BJ (cell line): ENCODE measurements at regions of chrX and their contacts with region 1.

Region 1: DNA sequence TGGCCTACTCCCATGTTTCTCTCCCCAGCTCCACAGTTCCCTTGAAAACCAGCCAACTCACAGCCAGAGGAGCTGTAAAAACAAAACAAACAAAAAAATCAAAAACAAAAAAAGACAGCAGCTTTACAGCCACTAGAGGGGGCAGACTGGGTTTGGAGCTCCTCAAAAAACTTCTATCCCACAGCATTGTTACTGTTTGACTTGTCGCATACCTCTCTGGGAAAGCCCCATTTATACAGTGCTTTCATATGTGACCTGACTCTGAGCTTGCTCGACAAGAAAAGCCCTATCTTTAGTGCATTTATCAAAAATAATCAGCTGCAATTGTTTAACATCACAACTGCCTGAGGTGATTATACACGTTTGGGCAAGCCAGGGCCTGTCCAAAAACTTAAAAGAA is 21.6 kb downstream of the TSPAN6 start:
- DNase-seq: peak; percentile 17
- H3K4me3 ChIP-seq: no peak overlapping the region
- H3K27me3 ChIP-seq: no peaks in the 10 kb centered on the region
- CTCF ChIP-seq: peak; percentile 63

Region 2: GRCh38 chrX:99663136-99663535 is 951.9 kb before region 1 on chrX:
- CTCF ChIA-PET with region 1: no interaction called
- POLR2A ChIA-PET with region 1: no interaction called
- DNase-seq: no peak
- H3K4me3 ChIP-seq: no peak overlapping the region
- H3K27me3 ChIP-seq: no peaks in the 10 kb centered on the region
- CTCF ChIP-seq: no peak

Region 3: DNA sequence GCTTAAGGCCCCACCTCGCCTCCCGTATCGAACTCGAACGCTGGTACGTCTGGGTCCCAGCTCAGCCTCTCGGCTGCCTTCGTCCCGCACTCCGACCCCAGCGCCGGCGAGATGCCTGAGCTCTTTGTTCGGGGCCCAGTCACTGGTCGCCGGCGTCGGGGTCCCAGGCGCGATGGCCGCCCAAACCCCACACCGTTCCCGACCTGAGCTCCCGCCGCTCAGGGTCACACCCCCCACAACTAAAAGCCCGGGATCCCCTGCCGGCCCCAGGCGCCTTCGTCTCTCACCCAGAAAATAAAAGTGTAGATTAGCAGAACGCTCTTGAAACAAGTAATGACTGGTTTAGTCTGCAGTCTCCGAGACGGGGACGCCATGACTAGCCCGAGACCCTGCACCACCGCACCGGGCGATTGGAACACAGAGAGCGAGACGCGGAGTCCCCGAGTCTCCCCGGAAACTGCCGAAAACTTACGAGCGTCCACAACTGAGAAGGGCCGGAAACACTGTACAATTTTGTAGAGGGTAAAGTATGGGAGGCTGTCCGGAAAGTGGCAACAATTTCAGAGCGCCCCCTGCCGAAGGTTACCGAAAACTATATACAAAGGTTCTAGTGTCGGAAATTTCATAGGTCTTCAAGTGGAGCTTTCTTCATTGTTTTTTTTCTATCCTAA is 21.5 kb after region 1 on chrX and contains the start of gene TSPAN6:
- CTCF ChIA-PET with region 1: interaction called, 18 read pairs
- POLR2A ChIA-PET with region 1: no interaction called
- DNase-seq: peak; percentile 50
- H3K4me3 ChIP-seq: peak within 1 kb of the TSS; percentile 68
- H3K27me3 ChIP-seq: no peaks in the 10 kb centered on the region
- CTCF ChIP-seq: peak; percentile 61
- polyA plus RNA-seq, gene TSPAN6: 8.8 and 19.7 TPM in 2 replicates

Region 4: GRCh38 chrX:100685284-100685996 is 70.4 kb after region 1 on chrX:
- CTCF ChIA-PET with region 1: interaction called, 10 read pairs
- POLR2A ChIA-PET with region 1: no interaction called
- DNase-seq: no peak
- H3K4me3 ChIP-seq: no peak overlapping the region
- H3K27me3 ChIP-seq: no peaks in the 10 kb centered on the region
- CTCF ChIP-seq: peak; percentile 72

Region 5: DNA sequence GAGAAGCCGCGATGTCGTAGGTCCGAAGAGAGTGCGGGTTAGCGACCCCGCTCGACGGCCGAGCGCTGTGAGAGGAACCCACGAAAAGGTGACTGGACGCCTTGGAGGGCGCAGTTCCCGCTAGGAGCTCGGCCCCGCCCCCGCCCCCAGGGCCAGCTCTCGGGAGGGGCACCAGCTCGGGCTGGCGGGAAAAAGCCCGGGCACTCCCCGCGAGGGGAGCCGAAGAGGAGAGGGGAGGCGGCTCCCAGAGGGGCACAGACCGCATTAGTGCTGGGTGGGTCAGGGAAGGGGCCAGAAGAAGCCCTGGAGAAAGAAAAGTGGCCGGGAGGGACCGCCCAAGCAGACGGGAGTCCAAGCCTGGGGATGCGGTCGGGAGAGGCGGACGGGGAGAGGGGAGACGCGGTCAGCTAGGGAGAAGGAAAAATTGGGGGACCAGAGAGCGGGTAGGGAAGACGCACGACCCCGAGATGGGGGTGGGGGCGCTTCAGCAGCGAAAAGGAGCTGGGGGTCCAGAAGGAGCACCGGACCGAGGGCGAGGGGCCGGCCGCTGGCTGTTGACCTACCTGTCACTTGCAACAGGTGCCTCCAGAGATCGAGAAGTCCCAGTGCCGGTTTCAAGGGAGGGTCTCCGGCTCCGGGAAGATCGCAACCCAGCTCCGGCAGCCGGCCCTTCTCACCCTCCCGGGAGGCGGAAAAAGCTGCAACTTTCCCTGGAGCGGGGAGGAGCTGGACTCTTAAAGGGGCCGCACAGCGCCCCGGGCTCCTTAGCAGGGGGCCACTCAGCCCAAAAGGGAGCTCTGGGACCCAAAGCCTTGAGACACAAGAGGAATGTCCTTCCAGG is 116.7 kb after region 1 on chrX and contains the start of gene SYTL4:
- CTCF ChIA-PET with region 1: no interaction called
- POLR2A ChIA-PET with region 1: no interaction called
- DNase-seq: no peak
- H3K4me3 ChIP-seq: peak within 1 kb of the TSS; percentile 73
- H3K27me3 ChIP-seq: no peaks in the 10 kb centered on the region; the same call in 1 of the 2 replicates
- CTCF ChIP-seq: 0 out of 2 replicates have a peak, but pooled peaks have one; percentile 10
- polyA plus RNA-seq, gene SYTL4: 3.3 and 5.0 TPM in 2 replicates